Panc1 (cell line): ENCODE measurements at regions of chr6 and their contacts with region 1.

Region 1: DNA sequence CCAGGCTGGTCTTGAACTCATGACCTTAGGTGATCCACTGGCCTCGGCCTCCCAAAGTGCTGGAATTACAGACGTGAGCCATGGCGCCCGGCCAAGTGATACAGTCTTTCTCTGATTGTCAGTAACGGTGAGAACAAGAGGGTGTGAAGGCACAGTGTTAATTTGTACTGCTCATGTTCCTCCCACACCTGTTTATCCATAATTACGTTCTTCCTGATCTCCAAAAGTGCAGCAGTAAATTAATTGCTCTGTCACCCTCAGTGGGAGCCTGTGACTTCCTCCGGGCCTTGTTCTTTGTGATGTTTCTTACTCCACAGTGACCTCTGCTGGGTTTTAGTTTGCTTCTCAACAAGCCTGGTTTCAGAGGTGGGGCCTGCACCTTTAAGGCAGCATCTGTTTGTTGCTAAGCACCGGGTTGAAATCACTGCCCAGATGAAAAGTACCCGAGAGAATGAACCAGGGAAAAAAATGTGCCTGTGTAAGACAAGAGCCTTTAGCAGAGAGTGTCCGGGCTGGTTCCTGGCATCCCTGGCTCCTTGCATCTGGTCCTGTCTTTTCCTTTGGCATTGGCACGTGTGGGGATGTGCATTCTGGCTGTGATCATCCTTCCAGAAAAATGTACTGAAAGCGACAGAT is 89.1 kb upstream of the CLDN20 start:
- DNase-seq: peak; percentile 77
- ATAC-seq: peak; percentile 83
- H3K4me3 ChIP-seq: no peak overlapping the region
- H3K27ac ChIP-seq: peak overlapping the region; percentile 55
- H3K4me1 ChIP-seq: peaks cover 37% of the 10 kb centered on the region
- H3K27me3 ChIP-seq: no peaks in the 10 kb centered on the region
- CTCF ChIP-seq: peak; percentile 81

Region 2: DNA sequence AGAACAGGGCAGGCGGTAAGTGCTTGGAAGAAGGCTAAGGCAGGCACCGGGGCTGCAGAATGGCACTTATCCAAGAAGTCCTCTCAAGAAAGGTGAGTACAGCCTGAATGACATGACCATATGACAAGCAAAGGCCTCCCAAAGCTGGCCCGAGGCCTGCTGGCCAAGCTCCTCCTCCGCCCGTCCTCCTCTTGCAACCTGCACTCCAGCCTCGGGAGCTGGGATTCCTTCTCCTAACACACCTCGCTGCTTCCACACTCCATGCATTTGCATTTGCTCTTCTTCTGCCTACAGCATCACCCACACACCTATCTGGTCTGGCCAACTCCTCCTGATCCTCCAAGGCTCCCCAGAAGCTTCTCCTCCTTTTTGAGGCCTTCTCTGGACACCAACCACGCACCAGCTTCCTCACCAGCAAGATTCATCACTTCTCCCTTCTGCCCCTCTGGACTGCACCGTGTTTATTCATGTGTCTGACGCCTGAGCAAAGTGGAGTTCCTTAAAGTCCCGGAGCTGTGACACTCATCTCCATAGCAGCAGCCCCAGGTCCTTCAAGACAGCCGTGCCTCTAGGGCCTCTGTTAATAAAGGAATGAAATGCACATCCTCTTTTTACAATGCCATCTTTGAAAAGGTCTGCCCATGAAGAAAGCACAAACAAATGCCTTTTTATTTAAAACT is 696.5 kb before region 1 on chr6:
- CTCF ChIA-PET with region 1: no interaction called
- POLR2A ChIA-PET with region 1: no interaction called
- in situ Hi-C with region 1: no loop called
- intact Hi-C with region 1: no loop called
- DNase-seq: no peak
- ATAC-seq: peak; percentile 62
- H3K4me3 ChIP-seq: no peak overlapping the region
- H3K27ac ChIP-seq: no peak overlapping the region
- H3K4me1 ChIP-seq: peaks cover 36% of the 10 kb centered on the region
- H3K27me3 ChIP-seq: no peaks in the 10 kb centered on the region
- CTCF ChIP-seq: no peak

Region 3: GRCh38 chr6:154675602-154676088 is 499.0 kb before region 1 on chr6:
- CTCF ChIA-PET with region 1: interaction called, 5 read pairs
- POLR2A ChIA-PET with region 1: no interaction called
- in situ Hi-C with region 1: no loop called
- intact Hi-C with region 1: loop called (anchors 5 kb)
- DNase-seq: peak; percentile 98
- ATAC-seq: peak; percentile 99
- H3K4me3 ChIP-seq: no peak overlapping the region
- H3K27ac ChIP-seq: no peak overlapping the region
- H3K4me1 ChIP-seq: no peaks in the 10 kb centered on the region
- H3K27me3 ChIP-seq: no peaks in the 10 kb centered on the region
- CTCF ChIP-seq: peak; percentile 99

Region 4: GRCh38 chr6:154868143-154868594 is 306.5 kb before region 1 on chr6:
- CTCF ChIA-PET with region 1: interaction called, 10 read pairs
- POLR2A ChIA-PET with region 1: no interaction called
- in situ Hi-C with region 1: no loop called
- intact Hi-C with region 1: loop called (anchors 5 kb)
- DNase-seq: peak; percentile 10
- ATAC-seq: 0 out of 2 replicates have a peak, but pooled peaks have one; percentile 66
- H3K4me3 ChIP-seq: no peak overlapping the region
- H3K27ac ChIP-seq: no peak overlapping the region
- H3K4me1 ChIP-seq: no peaks in the 10 kb centered on the region
- H3K27me3 ChIP-seq: no peaks in the 10 kb centered on the region
- CTCF ChIP-seq: peak; percentile 75; the same call in 1 of the 2 replicates

Region 5: GRCh38 chr6:154928325-154928922 is 246.3 kb before region 1 on chr6:
- CTCF ChIA-PET with region 1: interaction called, 7 read pairs
- POLR2A ChIA-PET with region 1: interaction called, 3 read pairs
- in situ Hi-C with region 1: no loop called
- intact Hi-C with region 1: loop called (anchors 1 kb)
- DNase-seq: peak; percentile 43
- ATAC-seq: peak; percentile 84
- H3K4me3 ChIP-seq: no peak overlapping the region
- H3K27ac ChIP-seq: no peak overlapping the region
- H3K4me1 ChIP-seq: peaks cover 13% of the 10 kb centered on the region; the same call in 1 of the 2 replicates
- H3K27me3 ChIP-seq: no peaks in the 10 kb centered on the region
- CTCF ChIP-seq: peak; percentile 86

Region 6: GRCh38 chr6:154962753-154963152 is 211.9 kb before region 1 on chr6:
- CTCF ChIA-PET with region 1: interaction called, 15 read pairs
- POLR2A ChIA-PET with region 1: no interaction called
- in situ Hi-C with region 1: no loop called
- intact Hi-C with region 1: no loop called
- DNase-seq: peak; percentile 25
- ATAC-seq: peak; percentile 93
- H3K4me3 ChIP-seq: no peak overlapping the region
- H3K27ac ChIP-seq: no peak overlapping the region
- H3K4me1 ChIP-seq: peaks cover 3% of the 10 kb centered on the region; the same call in 1 of the 2 replicates
- H3K27me3 ChIP-seq: no peaks in the 10 kb centered on the region
- CTCF ChIP-seq: no peak

Region 7: DNA sequence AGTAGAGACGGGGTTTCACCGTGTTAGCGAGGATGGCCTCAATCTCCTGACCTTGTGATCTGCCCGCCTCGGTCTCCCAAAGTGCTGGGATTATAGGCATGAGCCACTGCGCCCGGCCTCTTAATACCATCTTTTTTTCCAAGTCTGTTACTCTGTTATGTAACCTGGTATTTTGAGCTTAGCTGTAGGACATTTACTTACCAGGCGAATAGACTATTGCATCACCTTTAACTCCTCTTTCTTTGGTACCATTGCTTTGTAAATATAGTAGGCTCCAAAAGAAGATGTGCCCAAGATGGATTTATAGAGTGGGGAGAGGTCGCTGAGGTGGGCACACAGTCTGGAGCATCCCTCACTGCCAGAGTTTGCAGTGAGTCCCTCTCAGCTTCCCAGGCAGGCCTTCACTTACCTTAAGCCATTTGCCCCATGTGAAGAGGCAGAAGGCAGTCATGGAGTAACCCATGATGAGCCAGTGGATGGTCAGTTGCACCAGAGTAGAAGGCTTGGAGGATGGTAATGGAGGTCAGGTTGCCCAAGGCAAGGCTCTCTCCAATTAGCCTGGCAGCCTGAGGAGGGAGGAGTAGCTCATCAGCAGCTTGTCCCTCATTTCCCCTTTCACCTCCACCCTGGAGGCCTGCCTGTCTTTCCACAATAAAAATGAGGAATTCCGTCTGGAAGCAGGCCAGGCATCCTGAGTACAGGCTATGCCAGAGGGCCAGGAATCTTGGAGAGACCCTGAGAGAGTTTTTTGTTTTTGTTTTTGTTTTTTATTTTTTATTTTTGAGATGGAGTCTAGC is 169.9 kb before region 1 on chr6:
- CTCF ChIA-PET with region 1: no interaction called
- POLR2A ChIA-PET with region 1: no interaction called
- in situ Hi-C with region 1: no loop called
- intact Hi-C with region 1: loop called (anchors 5 kb)
- DNase-seq: no peak
- ATAC-seq: 0 out of 2 replicates have a peak, but pooled peaks have one; percentile 20
- H3K4me3 ChIP-seq: no peak overlapping the region
- H3K27ac ChIP-seq: no peak overlapping the region
- H3K4me1 ChIP-seq: peaks cover 15% of the 10 kb centered on the region
- H3K27me3 ChIP-seq: no peaks in the 10 kb centered on the region
- CTCF ChIP-seq: no peak

Region 8: DNA sequence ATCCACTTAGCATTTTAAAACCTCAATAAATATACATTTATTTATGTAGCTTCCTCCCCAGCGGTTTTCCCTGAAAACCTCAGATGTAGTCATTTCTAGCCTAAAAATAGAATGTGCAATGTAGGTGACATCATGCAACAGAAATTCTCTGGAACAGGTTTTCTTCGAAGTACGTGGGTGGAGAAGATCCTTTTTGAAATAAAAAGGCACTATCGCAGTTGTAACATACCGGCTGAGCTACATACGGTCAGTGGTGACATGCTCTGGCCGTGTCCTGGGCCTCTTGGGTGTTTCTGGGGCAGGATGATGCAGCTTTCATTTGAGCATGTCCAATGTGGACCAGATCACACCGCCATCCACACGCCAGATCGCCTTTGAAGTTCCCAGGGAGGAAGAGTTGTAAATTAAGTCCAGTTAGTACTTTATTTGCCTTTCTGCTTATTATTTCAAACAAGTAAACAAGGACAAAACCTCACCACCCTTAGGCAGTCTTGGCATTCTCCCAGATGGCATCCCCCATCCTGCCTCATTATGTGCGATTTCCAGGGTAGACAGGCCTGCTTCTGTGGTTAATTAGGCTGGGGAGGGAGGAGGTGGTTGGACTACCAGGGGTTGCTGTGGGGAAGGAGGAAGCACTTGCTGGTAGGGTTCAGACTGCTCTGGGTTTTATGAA is 20.4 kb before region 1 on chr6:
- CTCF ChIA-PET with region 1: no interaction called
- POLR2A ChIA-PET with region 1: no interaction called
- in situ Hi-C with region 1: no loop called
- intact Hi-C with region 1: no loop called
- DNase-seq: no peak
- ATAC-seq: no peak
- H3K4me3 ChIP-seq: no peak overlapping the region
- H3K27ac ChIP-seq: no peak overlapping the region
- H3K4me1 ChIP-seq: no peaks in the 10 kb centered on the region
- H3K27me3 ChIP-seq: no peaks in the 10 kb centered on the region
- CTCF ChIP-seq: no peak

Region 9: DNA sequence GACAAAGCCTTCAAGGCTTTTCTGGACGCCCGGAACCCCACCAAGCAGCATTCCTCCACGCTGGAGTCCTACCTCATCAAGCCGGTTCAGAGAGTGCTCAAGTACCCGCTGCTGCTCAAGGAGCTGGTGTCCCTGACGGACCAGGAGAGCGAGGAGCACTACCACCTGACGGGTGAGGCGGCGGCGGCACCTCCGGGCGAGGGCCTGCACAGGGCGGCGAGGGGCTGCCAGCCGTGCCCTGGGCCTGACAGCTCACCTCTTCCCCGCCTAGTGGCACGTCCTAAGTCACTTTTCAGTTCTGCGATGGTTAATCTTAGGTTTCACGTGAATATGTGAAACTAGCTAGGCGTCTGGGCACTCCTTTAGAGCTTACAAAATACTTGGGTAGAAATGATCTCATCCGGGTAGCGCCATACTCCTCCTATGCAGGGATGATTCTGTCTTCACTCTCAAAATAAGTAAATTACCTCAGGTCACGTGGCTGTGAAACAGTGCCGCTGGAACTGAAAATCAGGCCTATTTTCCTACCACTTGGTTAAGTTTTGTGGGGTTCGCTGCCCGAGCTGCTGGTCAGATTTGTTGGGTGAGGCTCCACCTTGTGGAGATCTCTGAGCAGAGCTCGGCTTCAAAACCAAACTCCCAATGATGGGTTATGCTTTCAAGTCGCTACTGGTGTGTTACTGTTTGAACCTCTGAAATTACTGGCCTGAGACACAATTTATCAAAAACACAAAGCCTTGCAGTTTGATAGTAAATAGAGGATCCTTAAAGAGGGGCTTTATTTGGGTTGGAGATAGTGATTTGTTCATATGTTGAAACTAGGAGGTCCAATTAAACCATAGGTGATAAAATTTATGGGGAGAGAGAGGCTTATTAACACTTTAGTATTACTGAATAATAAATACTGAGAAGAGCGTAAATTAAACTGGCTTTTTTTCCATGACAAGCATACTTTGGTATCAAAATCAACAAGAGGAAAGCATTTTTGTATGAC is 73.6 kb after region 1 on chr6:
- CTCF ChIA-PET with region 1: interaction called, 37 read pairs
- POLR2A ChIA-PET with region 1: no interaction called
- in situ Hi-C with region 1: no loop called
- intact Hi-C with region 1: loop called (anchors 1 kb)
- DNase-seq: peak; percentile 27
- ATAC-seq: peak; percentile 76
- H3K4me3 ChIP-seq: no peak overlapping the region
- H3K27ac ChIP-seq: peak overlapping the region; percentile 80
- H3K4me1 ChIP-seq: peaks cover 3% of the 10 kb centered on the region; the same call in 1 of the 2 replicates
- H3K27me3 ChIP-seq: no peaks in the 10 kb centered on the region
- CTCF ChIP-seq: peak; percentile 85